Caco-2 (cell line): ENCODE measurements at regions of chr6 and their contacts with region 1.

Region 1: GRCh38 chr6:70107852-70108629 is 194.8 kb downstream of the COL9A1 start:
- DNase-seq: peak in 1 of 2 experiments; percentile 37
- H3K4me3 ChIP-seq: no peak overlapping the region
- H3K4me3 Mint-ChIP-seq: no peak overlapping the region
- H3K27ac Mint-ChIP-seq: no peak overlapping the region
- H3K4me1 ChIP-seq: no peaks in the 10 kb centered on the region
- H3K4me1 Mint-ChIP-seq: no peaks in the 10 kb centered on the region
- H3K27me3 ChIP-seq: no peaks in the 10 kb centered on the region
- H3K27me3 Mint-ChIP-seq: peaks cover 12% of the 10 kb centered on the region
- CTCF ChIP-seq: peak; percentile 68

Region 2: DNA sequence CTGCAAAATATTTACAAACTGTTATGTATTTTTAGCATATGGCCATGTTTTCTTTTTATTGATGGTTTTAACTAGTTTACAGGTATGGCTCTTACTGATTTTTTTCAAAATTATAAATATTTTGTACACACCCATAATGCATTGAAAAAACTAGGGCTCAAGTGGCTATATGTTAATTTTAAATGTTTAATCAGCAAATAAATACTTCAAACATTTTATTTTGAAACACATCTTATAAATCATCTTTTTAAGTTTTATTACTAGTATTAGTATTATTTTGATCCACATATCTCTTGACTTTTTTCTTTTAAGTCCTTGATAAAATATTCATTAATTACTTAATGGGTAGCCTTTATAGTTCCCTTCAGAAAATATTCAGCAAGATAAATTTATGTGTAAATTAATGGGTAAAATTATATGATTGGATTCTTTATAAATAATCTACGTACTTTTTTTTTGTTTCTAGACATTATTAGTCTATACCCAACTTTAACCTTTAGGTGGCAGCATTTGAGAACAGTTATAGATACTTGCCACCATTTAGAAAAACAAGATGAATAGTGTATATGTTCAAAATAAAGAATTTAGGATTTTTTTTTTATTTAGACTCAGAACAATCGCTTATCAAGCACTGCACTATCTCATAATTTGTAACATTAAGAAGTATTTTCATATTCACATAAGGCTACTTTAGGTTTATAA is 1231.1 kb before region 1 on chr6:
- CTCF ChIA-PET with region 1: no interaction called
- POLR2A ChIA-PET with region 1: no interaction called
- intact Hi-C with region 1: loop called (anchors 2 kb)
- DNase-seq: no peak
- H3K4me3 ChIP-seq: no peak overlapping the region
- H3K4me3 Mint-ChIP-seq: no peak overlapping the region
- H3K27ac Mint-ChIP-seq: no peak overlapping the region
- H3K4me1 ChIP-seq: no peaks in the 10 kb centered on the region
- H3K4me1 Mint-ChIP-seq: no peaks in the 10 kb centered on the region
- H3K27me3 ChIP-seq: no peaks in the 10 kb centered on the region
- H3K27me3 Mint-ChIP-seq: peaks cover 3% of the 10 kb centered on the region
- CTCF ChIP-seq: peak; percentile 14 to 36

Region 3: GRCh38 chr6:68967549-68968300 is 1140.3 kb before region 1 on chr6:
- CTCF ChIA-PET with region 1: no interaction called
- POLR2A ChIA-PET with region 1: no interaction called
- intact Hi-C with region 1: loop called (anchors 5 kb)
- DNase-seq: peak; percentile 41 to 69
- H3K4me3 ChIP-seq: no peak overlapping the region
- H3K4me3 Mint-ChIP-seq: no peak overlapping the region
- H3K27ac Mint-ChIP-seq: no peak overlapping the region
- H3K4me1 ChIP-seq: peaks cover 7% of the 10 kb centered on the region; the same call in 1 of the 2 replicates
- H3K4me1 Mint-ChIP-seq: peaks cover 10% of the 10 kb centered on the region
- H3K27me3 ChIP-seq: no peaks in the 10 kb centered on the region; the same call in 1 of the 2 replicates
- H3K27me3 Mint-ChIP-seq: peaks cover 8% of the 10 kb centered on the region
- CTCF ChIP-seq: peak; percentile 78 to 92

Region 4: DNA sequence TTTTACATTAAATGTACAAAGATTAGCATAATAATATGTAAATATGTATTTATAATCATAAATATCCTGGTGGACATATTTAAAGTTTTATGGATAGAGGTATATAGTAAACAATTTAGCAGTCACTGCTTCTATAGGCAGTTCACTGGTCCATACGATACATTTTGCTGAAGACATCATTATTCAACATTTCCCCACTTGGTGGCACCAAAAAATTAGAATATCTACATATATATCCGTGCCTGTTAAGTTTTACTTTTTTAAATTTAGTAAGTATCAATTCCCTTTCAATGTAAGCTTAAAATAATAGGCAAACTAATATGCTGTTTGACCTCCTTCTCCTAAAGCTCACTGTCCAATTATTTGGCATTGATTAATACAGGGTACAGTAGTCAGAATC is 375.4 kb before region 1 on chr6:
- CTCF ChIA-PET with region 1: no interaction called
- POLR2A ChIA-PET with region 1: no interaction called
- intact Hi-C with region 1: loop called (anchors 1 kb)
- DNase-seq: no peak
- H3K4me3 ChIP-seq: no peak overlapping the region
- H3K4me3 Mint-ChIP-seq: no peak overlapping the region
- H3K27ac Mint-ChIP-seq: no peak overlapping the region
- H3K4me1 ChIP-seq: no peaks in the 10 kb centered on the region
- H3K4me1 Mint-ChIP-seq: no peaks in the 10 kb centered on the region
- H3K27me3 ChIP-seq: no peaks in the 10 kb centered on the region
- H3K27me3 Mint-ChIP-seq: no peaks in the 10 kb centered on the region
- CTCF ChIP-seq: peak in 1 of 2 experiments; percentile 19

Region 5: DNA sequence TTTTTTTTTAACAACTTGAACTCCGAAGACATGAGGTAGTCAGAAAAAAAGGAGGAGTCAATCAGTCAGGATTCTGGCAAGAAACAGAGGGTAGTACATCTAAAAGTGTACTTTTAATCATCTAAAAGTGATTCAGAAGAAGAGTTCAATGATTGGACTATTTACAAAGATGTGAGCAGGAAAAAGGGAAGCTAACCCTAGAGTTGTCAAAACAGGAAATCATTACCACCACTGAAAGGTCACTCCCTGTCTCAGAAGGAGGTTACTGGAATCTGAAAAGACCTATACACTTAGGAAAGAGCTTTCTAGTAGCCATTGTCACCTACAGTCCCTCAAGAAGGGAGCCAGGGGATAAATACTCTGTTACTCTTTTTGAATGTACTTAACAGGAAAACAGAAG is 294.5 kb before region 1 on chr6:
- CTCF ChIA-PET with region 1: no interaction called
- POLR2A ChIA-PET with region 1: no interaction called
- intact Hi-C with region 1: no loop called
- DNase-seq: no peak
- H3K4me3 ChIP-seq: no peak overlapping the region
- H3K4me3 Mint-ChIP-seq: no peak overlapping the region
- H3K27ac Mint-ChIP-seq: no peak overlapping the region
- H3K4me1 ChIP-seq: peaks cover 17% of the 10 kb centered on the region
- H3K4me1 Mint-ChIP-seq: peaks cover 22% of the 10 kb centered on the region
- H3K27me3 ChIP-seq: no peaks in the 10 kb centered on the region
- H3K27me3 Mint-ChIP-seq: peaks cover 4% of the 10 kb centered on the region
- CTCF ChIP-seq: no peak

Region 6: GRCh38 chr6:69841862-69842261 is 266.2 kb before region 1 on chr6:
- CTCF ChIA-PET with region 1: no interaction called
- POLR2A ChIA-PET with region 1: no interaction called
- intact Hi-C with region 1: no loop called
- DNase-seq: no peak
- H3K4me3 ChIP-seq: no peak overlapping the region
- H3K4me3 Mint-ChIP-seq: no peak overlapping the region
- H3K27ac Mint-ChIP-seq: no peak overlapping the region
- H3K4me1 ChIP-seq: no peaks in the 10 kb centered on the region
- H3K4me1 Mint-ChIP-seq: no peaks in the 10 kb centered on the region
- H3K27me3 ChIP-seq: no peaks in the 10 kb centered on the region
- H3K27me3 Mint-ChIP-seq: peaks cover 2% of the 10 kb centered on the region
- CTCF ChIP-seq: no peak

Region 7: GRCh38 chr6:70131528-70131927 is 23.5 kb after region 1 on chr6:
- CTCF ChIA-PET with region 1: no interaction called
- POLR2A ChIA-PET with region 1: no interaction called
- intact Hi-C with region 1: no loop called
- DNase-seq: no peak
- H3K4me3 ChIP-seq: no peak overlapping the region
- H3K4me3 Mint-ChIP-seq: no peak overlapping the region
- H3K27ac Mint-ChIP-seq: no peak overlapping the region
- H3K4me1 ChIP-seq: no peaks in the 10 kb centered on the region
- H3K4me1 Mint-ChIP-seq: no peaks in the 10 kb centered on the region
- H3K27me3 ChIP-seq: no peaks in the 10 kb centered on the region
- H3K27me3 Mint-ChIP-seq: peaks cover 7% of the 10 kb centered on the region
- CTCF ChIP-seq: no peak

Region 8: GRCh38 chr6:70151616-70152015 is 43.6 kb after region 1 on chr6:
- CTCF ChIA-PET with region 1: no interaction called
- POLR2A ChIA-PET with region 1: no interaction called
- intact Hi-C with region 1: no loop called
- DNase-seq: no peak
- H3K4me3 ChIP-seq: no peak overlapping the region
- H3K4me3 Mint-ChIP-seq: no peak overlapping the region
- H3K27ac Mint-ChIP-seq: no peak overlapping the region
- H3K4me1 ChIP-seq: no peaks in the 10 kb centered on the region
- H3K4me1 Mint-ChIP-seq: no peaks in the 10 kb centered on the region
- H3K27me3 ChIP-seq: no peaks in the 10 kb centered on the region
- H3K27me3 Mint-ChIP-seq: peaks cover 8% of the 10 kb centered on the region
- CTCF ChIP-seq: no peak

Region 9: DNA sequence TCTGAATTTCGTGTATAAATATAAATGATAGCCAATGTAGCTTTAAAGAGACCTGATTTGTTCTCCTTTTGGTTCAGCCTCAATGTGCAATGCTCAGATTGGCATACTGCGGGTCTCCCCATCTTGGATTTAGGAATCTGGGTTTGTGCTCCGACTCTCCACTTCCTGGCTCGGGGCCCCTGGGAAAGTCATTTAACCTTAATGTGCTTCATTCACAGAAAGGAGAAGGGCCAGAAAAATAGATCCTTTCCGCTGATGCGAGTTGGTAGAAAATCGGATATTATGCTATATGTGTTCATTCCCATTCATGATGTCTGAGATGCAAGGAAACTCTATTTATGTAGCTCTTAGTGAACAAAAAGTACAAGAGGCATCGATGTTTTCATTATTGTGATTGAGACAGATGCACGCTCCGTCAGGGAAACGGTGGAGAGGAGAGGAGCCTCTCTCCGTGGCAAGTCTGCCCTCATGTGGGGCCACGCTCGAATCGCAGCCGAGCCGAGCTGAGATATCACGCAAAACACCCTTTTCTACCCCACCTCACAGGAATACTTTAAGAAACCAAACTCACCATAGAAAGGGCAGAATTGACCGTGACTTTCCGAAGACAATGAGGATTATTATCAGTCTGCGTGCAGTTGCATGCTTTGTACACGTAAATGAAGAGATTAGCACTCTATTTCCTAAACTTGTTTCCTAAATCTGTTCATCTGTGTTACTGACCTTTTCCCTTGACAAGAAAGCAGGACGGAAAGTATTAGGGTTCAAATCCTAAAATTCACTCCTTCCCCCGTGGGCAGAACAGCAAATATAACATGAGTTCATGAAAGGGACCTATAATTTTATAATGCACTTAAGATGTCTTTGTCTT is 58.3 kb after region 1 on chr6:
- CTCF ChIA-PET with region 1: no interaction called
- POLR2A ChIA-PET with region 1: no interaction called
- intact Hi-C with region 1: loop called (anchors 2 kb)
- DNase-seq: peak; percentile 43 to 55
- H3K4me3 ChIP-seq: no peak overlapping the region
- H3K4me3 Mint-ChIP-seq: peak overlapping the region; percentile 61
- H3K27ac Mint-ChIP-seq: no peak overlapping the region
- H3K4me1 ChIP-seq: no peaks in the 10 kb centered on the region
- H3K4me1 Mint-ChIP-seq: no peaks in the 10 kb centered on the region
- H3K27me3 ChIP-seq: no peaks in the 10 kb centered on the region; the same call in 1 of the 2 replicates
- H3K27me3 Mint-ChIP-seq: no peaks in the 10 kb centered on the region
- CTCF ChIP-seq: peak; percentile 40 to 71